ENCODE measurements at regions of chr2 and their contacts with region 1.

Region 1: DNA sequence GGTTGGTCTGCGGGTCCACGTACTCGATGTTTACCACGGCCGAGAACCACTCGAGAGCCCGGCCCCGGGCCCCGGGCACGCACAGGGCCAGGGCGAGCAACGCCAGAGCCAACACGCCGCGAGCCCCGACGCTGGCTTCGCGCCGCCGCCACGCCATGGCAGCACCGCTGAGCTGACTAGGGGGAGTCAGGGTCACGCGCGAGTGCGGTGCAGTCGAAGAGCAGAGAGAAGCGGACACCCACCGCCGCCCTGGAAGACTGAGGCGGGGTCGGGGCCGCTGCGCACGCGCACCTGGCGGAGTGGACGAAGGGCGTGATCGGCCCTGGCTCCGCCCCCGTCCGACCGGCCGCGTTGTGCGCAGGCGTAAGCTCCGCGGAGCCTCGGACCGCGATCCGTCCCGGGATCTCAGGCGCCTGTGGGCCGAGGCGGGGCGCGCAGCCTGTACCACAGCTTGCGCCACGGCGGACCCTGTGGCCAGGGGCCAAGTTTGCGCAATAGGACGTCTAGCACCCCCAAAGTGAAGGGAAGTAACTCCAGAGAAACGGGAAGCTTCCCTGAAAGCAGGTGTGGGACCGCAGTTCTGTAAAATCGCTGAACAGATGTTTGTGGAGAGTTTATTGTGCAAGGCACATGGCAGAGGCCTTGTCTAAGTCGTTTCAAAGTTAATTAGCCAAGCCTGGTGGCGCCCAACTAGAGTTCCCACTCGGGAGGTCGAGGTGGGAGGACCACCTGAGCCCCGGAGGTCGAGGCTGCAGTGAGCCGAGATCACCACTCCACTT is at the start of gene RNF149:
- DNase-seq: peak; percentile 82 to 94 (median 88)
- ATAC-seq: peak; percentile 72 to 75
- H3K4me3 Mint-ChIP-seq: peak within 1 kb of the TSS; percentile 86 to 100 (median 97)
- H3K27ac Mint-ChIP-seq: peak within 1 kb of the TSS; percentile 89 to 99 (median 98)
- H3K4me1 Mint-ChIP-seq: peaks cover 33 to 83% (median 75%) of the 10 kb centered on the region in 4 donors
- H3K27me3 Mint-ChIP-seq: no peaks in the 10 kb centered on the region
- polyA plus RNA-seq, gene RNF149: 36.6 to 41.6 (median 39.0) TPM

Region 2: DNA sequence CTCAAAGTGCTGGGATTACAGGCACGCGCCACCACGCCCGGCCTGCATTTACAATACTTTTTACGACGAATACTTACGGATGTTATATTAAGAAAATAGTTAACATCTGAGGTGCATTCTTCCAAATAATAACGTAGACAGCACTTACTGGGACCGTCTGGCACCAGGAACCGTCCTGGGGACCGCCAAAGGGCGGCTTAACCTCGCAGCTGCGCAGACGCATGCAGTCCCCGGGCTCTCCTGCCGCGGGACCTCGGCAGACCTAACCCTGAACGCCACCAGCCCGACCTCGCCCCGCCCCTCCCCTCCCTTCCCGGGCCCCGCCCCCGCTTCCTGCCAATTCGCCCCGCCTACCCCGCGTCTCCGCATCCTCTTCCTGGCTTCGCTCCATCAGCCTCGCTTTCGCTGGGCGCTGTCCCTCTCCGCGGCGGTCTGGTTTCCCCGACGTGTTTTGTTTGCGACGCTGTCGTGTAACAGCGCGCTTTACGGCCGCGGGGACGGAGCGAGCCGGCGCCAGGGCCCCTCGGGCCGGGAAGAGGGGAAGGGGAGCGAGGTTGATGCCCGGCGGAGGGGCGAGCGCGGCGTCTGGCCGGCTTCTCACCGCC is 56.1 kb before region 1 on chr2 and contains the start of gene CNOT11:
- POLR2A ChIA-PET with region 1: interaction called, 11 read pairs
- DNase-seq: peak; percentile 97 to 99 (median 99)
- ATAC-seq: peak; percentile 75 to 82
- H3K4me3 Mint-ChIP-seq: peak within 1 kb of the TSS; percentile 92 to 99 (median 96)
- H3K27ac Mint-ChIP-seq: peak within 1 kb of the TSS; percentile 92 to 99 (median 96)
- H3K4me1 Mint-ChIP-seq: peaks cover 27 to 58% (median 50%) of the 10 kb centered on the region in 4 donors
- H3K27me3 Mint-ChIP-seq: peaks cover 0 to 2% (median 0%) of the 10 kb centered on the region in 5 donors
- polyA plus RNA-seq, gene CNOT11: 64.2 to 69.3 (median 64.9) TPM

Region 3: GRCh38 chr2:101266027-101266459 is 42.6 kb before region 1 on chr2:
- POLR2A ChIA-PET with region 1: no interaction called
- DNase-seq: no peak
- ATAC-seq: no peak
- H3K4me3 Mint-ChIP-seq: no peak overlapping the region
- H3K27ac Mint-ChIP-seq: peak overlapping the region in 6 of 10 donors; percentile 15 to 77 (median 71)
- H3K4me1 Mint-ChIP-seq: peaks cover 23 to 35% (median 31%) of the 10 kb centered on the region in 4 donors
- H3K27me3 Mint-ChIP-seq: no peaks in the 10 kb centered on the region

Region 4: GRCh38 chr2:101282980-101283379 is 25.6 kb before region 1 on chr2:
- POLR2A ChIA-PET with region 1: no interaction called
- DNase-seq: no peak
- ATAC-seq: no peak
- H3K4me3 Mint-ChIP-seq: peak overlapping the region in 1 of 10 donors; percentile 7
- H3K27ac Mint-ChIP-seq: peak overlapping the region in 8 of 10 donors; percentile 45 to 90 (median 84)
- H3K4me1 Mint-ChIP-seq: peaks cover 13 to 33% (median 15%) of the 10 kb centered on the region in 4 donors
- H3K27me3 Mint-ChIP-seq: no peaks in the 10 kb centered on the region

Region 5: GRCh38 chr2:101328474-101329007 is 19.9 kb after region 1 on chr2:
- POLR2A ChIA-PET with region 1: interaction called, 94 read pairs
- DNase-seq: peak in 4 of 10 donors; percentile 47 to 80 (median 72)
- ATAC-seq: peak; percentile 72 to 91
- H3K4me3 Mint-ChIP-seq: no peak overlapping the region
- H3K27ac Mint-ChIP-seq: no peak overlapping the region
- H3K4me1 Mint-ChIP-seq: peaks cover 19 to 31% (median 21%) of the 10 kb centered on the region in 4 donors
- H3K27me3 Mint-ChIP-seq: no peaks in the 10 kb centered on the region

Region 6: GRCh38 chr2:101688261-101688660 is 379.6 kb after region 1 on chr2:
- POLR2A ChIA-PET with region 1: no interaction called
- DNase-seq: no peak
- ATAC-seq: no peak
- H3K4me3 Mint-ChIP-seq: no peak overlapping the region
- H3K27ac Mint-ChIP-seq: no peak overlapping the region
- H3K4me1 Mint-ChIP-seq: peaks cover 12 to 24% (median 20%) of the 10 kb centered on the region in 4 donors
- H3K27me3 Mint-ChIP-seq: no peaks in the 10 kb centered on the region

Measured in naive thymus-derived CD8-positive, alpha-beta T cell (primary cell).